Activated CD4-positive, alpha-beta T cell treated with anti-CD3 and anti-CD28 coated beads, Interleukin-2, amount 10 ng/mL, durations not matched to agents 7 days and 5 days (primary cell): ENCODE measurements at regions of chr12 and their contacts with region 1.

Region 1: DNA sequence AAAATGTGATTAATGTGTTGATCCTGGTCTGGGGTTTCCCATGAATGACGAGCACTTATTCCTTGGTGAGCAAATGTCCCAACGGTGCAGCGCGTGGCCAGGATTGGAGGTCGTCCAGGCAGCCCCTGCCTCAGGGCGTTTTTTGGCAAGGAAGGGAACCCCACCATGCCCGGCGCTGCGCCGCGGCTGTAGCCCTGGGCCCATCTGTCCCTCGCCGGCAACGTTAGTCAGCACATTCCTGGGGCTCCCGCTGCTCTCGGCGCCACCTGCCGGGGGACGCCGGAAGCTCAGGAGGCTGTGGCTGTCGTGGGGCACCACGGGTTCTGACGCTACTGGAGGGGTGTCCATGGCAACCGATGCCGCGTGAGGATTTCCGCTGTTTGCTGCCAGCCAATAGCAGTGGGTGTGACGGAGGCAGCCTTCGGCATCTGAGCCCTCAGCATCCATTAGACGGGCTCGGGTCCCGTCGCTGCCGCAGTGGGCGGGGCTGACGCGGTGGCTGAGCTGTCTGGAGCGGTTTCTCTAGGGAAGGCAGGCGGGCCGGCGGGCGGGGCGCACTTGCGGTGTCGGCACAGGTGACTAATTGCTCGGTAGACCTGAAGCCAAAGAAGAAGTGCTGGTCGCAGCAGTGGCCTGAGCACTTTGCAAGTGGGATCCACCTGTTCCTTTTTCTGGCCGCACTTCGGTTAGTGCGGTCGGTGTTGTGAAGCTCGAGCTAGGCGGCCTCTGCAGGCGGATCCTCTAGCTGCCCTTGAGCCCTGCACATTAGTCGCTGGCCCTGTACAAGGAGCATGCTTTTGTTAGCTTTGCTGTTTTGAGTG is 29.5 kb downstream of the RAB35 start:
- DNase-seq: peak; percentile 100
- H3K4me3 Mint-ChIP-seq: peak overlapping the region; percentile 62
- H3K27ac Mint-ChIP-seq: peak overlapping the region; percentile 82
- H3K4me1 Mint-ChIP-seq: peaks cover 40% of the 10 kb centered on the region
- H3K27me3 Mint-ChIP-seq: no peaks in the 10 kb centered on the region

Region 2: GRCh38 chr12:119988782-119989668 is 98.0 kb before region 1 on chr12 and contains the start of gene BICDL1:
- CTCF ChIA-PET with region 1: interaction called, 12 read pairs
- POLR2A ChIA-PET with region 1: interaction called, 4 read pairs
- DNase-seq: peak; percentile 97
- H3K4me3 Mint-ChIP-seq: peak within 1 kb of the TSS; percentile 81
- H3K27ac Mint-ChIP-seq: peak within 1 kb of the TSS; percentile 82
- H3K4me1 Mint-ChIP-seq: peaks cover 39% of the 10 kb centered on the region
- H3K27me3 Mint-ChIP-seq: peaks cover 7% of the 10 kb centered on the region
- total RNA-seq, gene BICDL1: 51.2 to 65.9 TPM

Region 3: DNA sequence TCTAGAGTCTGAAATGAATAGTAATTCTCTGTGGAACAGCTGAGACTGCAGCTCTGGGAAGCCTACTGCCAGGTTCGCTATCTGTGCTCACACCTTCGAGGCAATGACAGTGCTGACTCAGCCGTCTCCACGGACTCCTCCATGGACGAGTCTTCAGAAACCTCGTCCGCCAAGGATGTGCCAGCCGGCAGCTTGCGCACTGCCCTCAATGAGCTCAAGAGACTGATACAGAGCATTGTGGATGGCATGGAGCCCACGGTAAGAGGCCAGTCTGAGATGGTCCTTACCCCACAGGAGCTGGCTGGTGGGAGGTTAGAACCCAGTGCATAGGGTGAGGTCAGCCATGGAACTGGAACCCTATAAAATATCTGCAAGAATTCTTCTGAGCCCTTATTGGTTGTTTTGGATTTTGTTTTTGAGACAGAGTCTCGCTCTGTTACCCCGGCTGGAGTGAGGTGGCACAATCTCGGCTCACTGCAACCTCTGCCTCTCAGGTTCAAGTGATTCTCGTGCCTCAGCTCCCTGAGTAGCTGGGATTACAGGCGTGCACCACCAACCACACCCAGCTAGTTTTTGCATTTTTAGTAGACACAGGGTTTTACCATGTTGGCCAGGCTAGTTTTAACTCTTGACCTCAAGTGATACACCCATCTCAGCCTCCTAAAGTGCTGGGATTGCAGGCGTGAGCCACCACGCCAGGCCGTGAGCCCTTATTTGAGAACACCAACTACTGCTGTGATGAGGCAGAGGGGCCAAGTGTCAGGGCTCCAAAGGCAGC is 14.3 kb before region 1 on chr12:
- CTCF ChIA-PET with region 1: interaction called, 18 read pairs
- POLR2A ChIA-PET with region 1: no interaction called
- DNase-seq: no peak
- H3K4me3 Mint-ChIP-seq: no peak overlapping the region
- H3K27ac Mint-ChIP-seq: no peak overlapping the region
- H3K4me1 Mint-ChIP-seq: peaks cover 18% of the 10 kb centered on the region
- H3K27me3 Mint-ChIP-seq: no peaks in the 10 kb centered on the region

Region 4: GRCh38 chr12:120100435-120101029 is 13.5 kb after region 1 on chr12:
- CTCF ChIA-PET with region 1: interaction called, 19 read pairs
- POLR2A ChIA-PET with region 1: no interaction called
- DNase-seq: no peak
- H3K4me3 Mint-ChIP-seq: no peak overlapping the region
- H3K27ac Mint-ChIP-seq: peak overlapping the region; percentile 25
- H3K4me1 Mint-ChIP-seq: peaks cover 24% of the 10 kb centered on the region
- H3K27me3 Mint-ChIP-seq: no peaks in the 10 kb centered on the region

Region 5: GRCh38 chr12:120116792-120117651 is 30.0 kb after region 1 on chr12:
- CTCF ChIA-PET with region 1: interaction called, 20 read pairs
- POLR2A ChIA-PET with region 1: interaction called, 3 read pairs
- DNase-seq: peak; percentile 97
- H3K4me3 Mint-ChIP-seq: peak overlapping the region; percentile 89
- H3K27ac Mint-ChIP-seq: peak overlapping the region; percentile 89
- H3K4me1 Mint-ChIP-seq: peaks cover 77% of the 10 kb centered on the region
- H3K27me3 Mint-ChIP-seq: no peaks in the 10 kb centered on the region

Region 6: GRCh38 chr12:120216742-120217605 is 130.0 kb after region 1 on chr12:
- CTCF ChIA-PET with region 1: no interaction called
- POLR2A ChIA-PET with region 1: no interaction called
- DNase-seq: no peak
- H3K4me3 Mint-ChIP-seq: no peak overlapping the region
- H3K27ac Mint-ChIP-seq: no peak overlapping the region
- H3K4me1 Mint-ChIP-seq: no peaks in the 10 kb centered on the region
- H3K27me3 Mint-ChIP-seq: no peaks in the 10 kb centered on the region